H1 (cell line): ENCODE measurements at regions of chr9 and their contacts with region 1.

Region 1: GRCh38 chr9:89675058-89675742 is 70.4 kb downstream of the GADD45G start:
- DNase-seq: peak in 1 of 2 experiments; percentile 70
- H3K4me3 ChIP-seq: no peak overlapping the region
- H3K27ac ChIP-seq: no peak overlapping the region; the same call in 1 of the 2 replicates
- H3K4me1 ChIP-seq: peaks cover 23 to 50% (median 42%) of the 10 kb centered on the region in 4 experiments
- H3K27me3 ChIP-seq: peaks cover 0 to 23% (median 11%) of the 10 kb centered on the region in 4 experiments; a peak in 5 of 7 replicates
- CTCF ChIP-seq: no peak
- EP300 ChIP-seq: no peak
- POLR2A ChIP-seq: no peak
- RAD21 ChIP-seq: no peak

Region 2: DNA sequence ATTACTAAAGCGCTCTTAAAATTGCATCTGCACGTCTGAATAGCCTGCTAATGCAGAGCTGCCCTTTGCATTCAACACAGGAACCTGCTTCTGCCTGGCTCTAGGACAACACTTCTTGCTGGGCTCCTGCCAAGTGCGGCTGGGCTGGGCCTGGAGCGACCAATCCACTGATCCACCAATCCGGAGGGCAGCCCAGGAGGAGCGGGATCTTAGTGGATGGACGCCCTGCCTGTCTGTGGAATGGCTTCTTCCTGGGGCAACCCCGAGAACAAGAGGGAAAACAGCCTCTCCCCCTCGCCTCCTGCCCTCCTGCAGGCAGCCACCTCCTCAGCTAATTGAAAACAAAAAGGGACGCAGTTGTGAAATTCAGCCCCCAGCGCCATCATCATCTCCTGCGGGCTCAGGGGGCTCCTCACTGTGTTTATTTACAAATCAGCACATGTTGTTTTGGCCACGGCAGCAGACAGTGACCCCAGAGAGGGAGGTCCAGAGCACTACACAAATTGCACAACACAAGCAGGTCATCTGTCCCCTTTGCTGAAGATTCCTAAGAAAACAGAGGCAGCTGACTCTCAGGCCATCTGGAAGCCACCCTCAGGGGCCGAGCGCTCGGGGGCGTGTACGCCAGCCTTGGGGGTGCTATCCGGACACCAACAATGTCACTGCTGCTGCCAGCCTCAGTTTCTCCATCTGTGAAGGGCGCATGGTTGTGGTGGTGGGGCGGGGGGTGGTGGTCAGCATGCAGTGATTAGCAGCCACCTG is 13.1 kb before region 1 on chr9:
- CTCF ChIA-PET with region 1: interaction called, 4 read pairs
- POLR2A ChIA-PET with region 1: interaction called, 20 read pairs
- DNase-seq: peak; percentile 71 to 95
- H3K4me3 ChIP-seq: no peak overlapping the region; a peak in 2 of 8 replicates
- H3K27ac ChIP-seq: no peak overlapping the region
- H3K4me1 ChIP-seq: peaks cover 8 to 25% (median 13%) of the 10 kb centered on the region in 4 experiments
- H3K27me3 ChIP-seq: peaks cover 0 to 2% (median 0%) of the 10 kb centered on the region in 4 experiments; a peak in 1 of 7 replicates
- CTCF ChIP-seq: no peak
- EP300 ChIP-seq: no peak
- POLR2A ChIP-seq: no peak
- RAD21 ChIP-seq: no peak